ENCODE measurements at regions of chr19 and their contacts with region 1.

Region 1: DNA sequence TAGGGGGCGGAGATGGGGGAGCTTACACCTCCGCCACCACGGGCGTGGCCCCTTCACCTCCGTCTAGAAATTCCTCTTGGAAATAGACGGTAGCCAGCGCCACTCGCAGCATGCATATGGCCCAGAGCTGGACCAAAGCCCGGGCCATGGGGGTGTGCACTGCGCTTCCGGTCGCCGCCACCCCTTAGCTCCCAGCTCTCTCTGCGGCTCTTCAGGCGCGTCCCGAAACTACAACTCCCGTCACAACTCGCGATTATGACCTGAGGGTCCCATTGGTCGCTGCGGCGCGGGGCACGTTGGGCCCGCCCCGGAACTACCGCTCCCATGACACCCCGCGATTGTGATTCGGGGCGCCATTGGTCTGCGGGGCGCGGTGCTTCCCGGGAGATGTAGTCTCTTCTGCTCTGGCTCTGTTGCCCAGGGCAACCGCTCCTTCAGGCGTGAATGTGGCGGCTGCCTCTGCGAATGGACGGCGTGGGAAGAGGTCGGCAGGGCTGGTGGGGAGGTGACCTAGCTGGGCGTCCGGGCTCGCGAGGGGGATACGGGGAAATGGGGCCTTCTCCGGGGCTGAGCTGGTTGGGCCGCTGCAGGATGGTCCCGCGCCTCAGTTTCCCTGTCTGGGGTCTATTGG is at the starts of genes C19orf44 and CALR3:
- H3K4me3 Mint-ChIP-seq: peak within 1 kb of the TSS; percentile 94
- H3K27ac Mint-ChIP-seq: peak within 1 kb of the TSS; percentile 81
- H3K4me1 Mint-ChIP-seq: peaks cover 20% of the 10 kb centered on the region
- H3K27me3 Mint-ChIP-seq: no peaks in the 10 kb centered on the region

Region 2: GRCh38 chr19:16446724-16447368 is 49.3 kb before region 1 on chr19:
- intact Hi-C with region 1: loop called (anchors 10 kb)
- H3K4me3 Mint-ChIP-seq: peak overlapping the region; percentile 13
- H3K27ac Mint-ChIP-seq: peak overlapping the region; percentile 84
- H3K4me1 Mint-ChIP-seq: peaks cover 85% of the 10 kb centered on the region
- H3K27me3 Mint-ChIP-seq: no peaks in the 10 kb centered on the region

Region 3: DNA sequence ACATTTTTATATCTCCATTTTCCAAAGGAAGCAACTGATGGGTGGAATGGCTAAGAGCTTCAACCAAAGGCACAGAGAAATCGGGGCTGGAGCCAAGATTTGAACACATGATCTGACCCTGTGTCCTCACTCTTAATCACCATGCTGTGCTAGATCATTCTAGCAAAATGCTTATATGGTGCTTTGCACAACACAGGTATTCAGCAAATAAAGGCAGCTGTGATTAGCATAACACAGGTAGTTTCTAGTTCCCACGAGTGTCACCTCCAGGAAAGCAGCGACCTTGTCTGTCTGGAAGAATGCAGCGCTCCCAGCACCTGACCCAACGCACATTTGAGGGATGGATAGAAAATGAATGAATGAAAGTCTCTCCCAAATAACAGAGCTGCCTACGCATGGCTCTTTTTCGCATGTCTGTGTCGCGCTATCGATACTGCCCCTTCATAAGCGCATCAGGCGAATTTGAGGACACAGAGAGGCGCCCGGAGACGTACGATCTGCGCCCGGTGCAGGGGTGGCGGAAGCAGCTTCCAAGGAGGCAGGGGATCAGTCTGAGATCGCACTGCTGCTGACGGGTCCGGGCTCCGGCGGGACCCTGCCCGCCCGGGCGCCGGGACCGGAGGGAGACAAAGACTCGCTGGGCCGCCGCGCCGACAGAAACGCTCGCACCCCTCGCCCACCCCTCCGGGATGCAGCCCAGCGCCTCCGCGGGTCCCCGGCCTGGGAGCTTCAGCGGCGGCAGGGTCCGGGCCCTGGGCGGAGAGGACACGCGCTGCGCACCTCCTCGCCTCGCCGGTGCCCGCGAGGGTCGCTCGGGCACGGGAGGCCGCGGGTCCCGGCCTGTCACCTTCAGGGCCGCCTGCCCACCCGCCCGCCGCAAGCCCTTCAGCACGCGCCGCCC is 24.9 kb before region 1 on chr19:
- intact Hi-C with region 1: loop called (anchors 1 kb)
- H3K4me3 Mint-ChIP-seq: peak overlapping the region; percentile 80
- H3K27ac Mint-ChIP-seq: peak overlapping the region; percentile 69
- H3K4me1 Mint-ChIP-seq: peaks cover 41% of the 10 kb centered on the region
- H3K27me3 Mint-ChIP-seq: no peaks in the 10 kb centered on the region

Measured in dendritic cell treated with granulocyte-macrophage colony-stimulating factor and Interleukin-4, amounts not matched to agents 40 ng/mL and 50 ng/mL, for 4 days (primary cell).